H1 (cell line): ENCODE measurements at regions of chr7 and their contacts with region 1.

Region 1: GRCh38 chr7:76020031-76020714 is 25.8 kb upstream of the TMEM120A start:
- DNase-seq: peak; percentile 38 to 90
- H3K4me3 ChIP-seq: no peak overlapping the region
- H3K27ac ChIP-seq: no peak overlapping the region
- H3K4me1 ChIP-seq: no peaks in the 10 kb centered on the region
- H3K27me3 ChIP-seq: no peaks in the 10 kb centered on the region
- CTCF ChIP-seq: peak; percentile 94 to 96 (median 94)
- EP300 ChIP-seq: no peak
- POLR2A ChIP-seq: no peak
- RAD21 ChIP-seq: peak; percentile 97 to 98

Region 2: DNA sequence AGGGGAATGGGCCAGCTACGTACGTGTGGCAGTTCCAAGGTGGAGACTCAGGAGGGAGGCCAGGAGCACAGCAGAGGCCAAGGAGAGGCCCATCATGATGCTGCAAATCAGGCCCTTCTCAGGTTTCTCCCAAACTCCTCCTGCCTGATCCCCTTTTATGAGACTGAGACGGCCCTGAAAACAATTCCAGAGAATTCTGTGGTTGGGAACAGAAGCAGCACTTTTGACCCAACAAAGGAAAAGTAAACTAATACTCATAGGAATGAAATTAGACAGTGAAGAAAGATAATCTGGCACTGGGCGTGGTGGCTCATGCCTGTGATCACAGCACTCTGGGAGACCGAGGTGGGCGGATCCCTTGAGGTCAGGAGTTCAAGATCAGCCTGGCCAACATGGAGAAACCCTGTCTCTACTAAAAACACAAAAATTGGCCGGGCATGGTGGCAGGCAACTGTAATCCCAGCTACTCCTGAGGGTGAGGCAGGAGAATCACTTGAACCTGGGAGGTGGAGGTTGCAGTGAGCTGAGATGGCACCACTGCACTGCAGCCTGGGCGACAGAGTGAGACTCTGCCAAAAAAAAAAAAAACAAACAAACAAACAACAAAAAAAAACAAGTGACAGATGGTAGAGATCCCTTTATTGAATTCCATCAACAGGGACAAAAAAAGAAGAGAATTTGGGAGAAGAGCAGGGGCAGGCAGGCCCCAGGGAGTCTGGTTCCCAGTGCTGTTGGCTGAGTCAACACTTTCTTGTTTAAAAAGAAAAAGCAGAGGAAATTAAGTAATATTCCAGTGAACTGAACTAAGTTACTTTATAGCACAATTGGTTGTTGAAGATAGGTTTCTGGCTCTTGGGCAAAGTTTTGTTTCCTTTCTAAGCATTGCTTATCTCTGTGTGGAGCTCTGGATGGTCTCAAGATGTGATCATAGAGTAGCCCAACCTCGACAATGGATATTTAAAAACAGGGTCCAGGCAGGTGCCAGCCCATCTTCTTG is 247.8 kb before region 1 on chr7 and contains the start of gene CCL26:
- CTCF ChIA-PET with region 1: no interaction called
- POLR2A ChIA-PET with region 1: no interaction called
- DNase-seq: no peak
- H3K4me3 ChIP-seq: no peak within 1 kb of the TSS
- H3K27ac ChIP-seq: no peak within 1 kb of the TSS
- H3K4me1 ChIP-seq: peaks cover 0 to 3% (median 0%) of the 10 kb centered on the region in 4 experiments; a peak in 2 of 7 replicates
- H3K27me3 ChIP-seq: no peaks in the 10 kb centered on the region
- CTCF ChIP-seq: no peak
- EP300 ChIP-seq: no peak
- POLR2A ChIP-seq: no peak
- RAD21 ChIP-seq: no peak
- total RNA-seq, gene CCL26: 14.8 and 14.9 TPM in 2 replicates

Region 3: GRCh38 chr7:75872073-75872782 is 147.9 kb before region 1 on chr7:
- CTCF ChIA-PET with region 1: interaction called, 57 read pairs
- POLR2A ChIA-PET with region 1: no interaction called
- DNase-seq: no peak
- H3K4me3 ChIP-seq: no peak overlapping the region
- H3K27ac ChIP-seq: no peak overlapping the region
- H3K4me1 ChIP-seq: no peaks in the 10 kb centered on the region
- H3K27me3 ChIP-seq: no peaks in the 10 kb centered on the region
- CTCF ChIP-seq: no peak
- EP300 ChIP-seq: no peak
- POLR2A ChIP-seq: no peak
- RAD21 ChIP-seq: no peak

Region 4: DNA sequence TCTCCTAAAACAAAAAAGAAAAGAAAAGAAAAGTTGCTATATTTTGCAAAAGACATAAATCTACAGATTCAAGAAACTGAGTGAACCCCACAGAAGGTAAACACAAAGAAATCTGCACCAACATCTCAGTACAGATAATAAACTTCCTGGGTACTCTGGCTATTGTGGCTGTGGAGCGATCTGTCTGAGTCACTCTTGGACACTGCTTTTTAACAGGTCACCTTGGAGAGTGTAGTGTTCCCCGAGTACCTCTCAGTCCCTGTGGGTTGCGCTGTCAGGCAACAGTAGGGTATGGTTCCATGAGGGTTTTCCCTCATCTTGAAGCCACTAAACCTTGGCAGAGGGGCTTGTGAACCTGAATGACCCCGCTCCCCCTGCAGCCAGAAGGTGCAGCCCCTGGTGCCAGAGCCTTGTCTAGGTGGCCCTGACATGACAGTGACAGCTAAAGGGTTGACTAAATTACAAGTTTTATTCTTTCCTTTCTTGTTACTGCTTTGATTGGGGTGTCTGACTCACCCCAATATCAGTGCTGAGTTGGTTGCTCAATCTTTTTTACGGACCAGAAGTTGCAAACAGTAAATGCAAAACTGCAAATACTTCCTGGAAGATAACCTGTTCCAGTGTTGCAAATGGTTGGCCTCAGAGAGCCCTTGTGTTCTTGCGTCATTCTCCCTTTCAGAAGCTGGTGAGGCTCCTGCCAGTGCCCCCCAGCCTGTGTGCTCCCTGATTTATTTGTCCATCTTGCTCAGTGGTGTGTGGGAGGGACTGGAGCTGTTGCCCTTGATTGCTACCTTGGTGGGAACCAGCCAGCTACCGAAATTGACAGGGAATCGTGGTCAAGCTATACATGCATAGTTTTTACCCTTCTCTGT is 74.6 kb before region 1 on chr7:
- CTCF ChIA-PET with region 1: interaction called, 13 read pairs
- POLR2A ChIA-PET with region 1: interaction called, 3 read pairs
- DNase-seq: no peak
- H3K4me3 ChIP-seq: no peak overlapping the region
- H3K27ac ChIP-seq: no peak overlapping the region
- H3K4me1 ChIP-seq: no peaks in the 10 kb centered on the region; a peak in 1 of 7 replicates
- H3K27me3 ChIP-seq: no peaks in the 10 kb centered on the region
- CTCF ChIP-seq: peak in 1 of 3 experiments; percentile 11; a peak in 1 of 4 replicates
- EP300 ChIP-seq: no peak
- POLR2A ChIP-seq: no peak
- RAD21 ChIP-seq: peak in 1 of 2 experiments; percentile 31; a peak in 1 of 4 replicates

Region 5: GRCh38 chr7:75994388-75995051 is 25.7 kb before region 1 on chr7 and contains the start of gene TMEM120A:
- CTCF ChIA-PET with region 1: interaction called, 41 read pairs
- POLR2A ChIA-PET with region 1: interaction called, 4 read pairs
- DNase-seq: peak; percentile 56 to 97
- H3K4me3 ChIP-seq: peak within 1 kb of the TSS; percentile 61 to 96 (median 68)
- H3K27ac ChIP-seq: no peak within 1 kb of the TSS
- H3K4me1 ChIP-seq: peaks cover 0 to 28% (median 17%) of the 10 kb centered on the region in 4 experiments; a peak in 6 of 7 replicates
- H3K27me3 ChIP-seq: no peaks in the 10 kb centered on the region
- CTCF ChIP-seq: 0 out of 4 replicates have a peak, but pooled peaks of 1 of the 3 experiments have one; percentile 7
- EP300 ChIP-seq: peak in 1 of 2 experiments; percentile 60; a peak in 1 of 3 replicates
- POLR2A ChIP-seq: peak in 1 of 2 experiments; percentile 89; a peak in 2 of 3 replicates
- RAD21 ChIP-seq: peak; percentile 2 to 16; a peak in 1 of 4 replicates
- total RNA-seq, gene TMEM120A: 15.6 and 21.2 TPM in 2 replicates

Region 6: GRCh38 chr7:76002139-76002538 is 18.0 kb before region 1 on chr7:
- CTCF ChIA-PET with region 1: interaction called, 18 read pairs
- POLR2A ChIA-PET with region 1: no interaction called
- DNase-seq: no peak
- H3K4me3 ChIP-seq: no peak overlapping the region
- H3K27ac ChIP-seq: no peak overlapping the region
- H3K4me1 ChIP-seq: no peaks in the 10 kb centered on the region
- H3K27me3 ChIP-seq: no peaks in the 10 kb centered on the region
- CTCF ChIP-seq: no peak
- EP300 ChIP-seq: no peak
- POLR2A ChIP-seq: no peak
- RAD21 ChIP-seq: no peak

Region 7: GRCh38 chr7:76037310-76037709 is 17.1 kb after region 1 on chr7:
- CTCF ChIA-PET with region 1: interaction called, 12 read pairs
- POLR2A ChIA-PET with region 1: interaction called, 3 read pairs
- DNase-seq: no peak
- H3K4me3 ChIP-seq: no peak overlapping the region
- H3K27ac ChIP-seq: no peak overlapping the region; the same call in 1 of the 2 replicates
- H3K4me1 ChIP-seq: no peaks in the 10 kb centered on the region
- H3K27me3 ChIP-seq: no peaks in the 10 kb centered on the region
- CTCF ChIP-seq: no peak
- EP300 ChIP-seq: no peak
- POLR2A ChIP-seq: no peak
- RAD21 ChIP-seq: no peak